CD4-positive, alpha-beta T cell (primary cell): ENCODE measurements at regions of chr1 and their contacts with region 1.

Region 1: GRCh38 chr1:3910857-3911845 is 11.1 kb upstream of the C1orf174 start:
- DNase-seq: peak; percentile 68 to 86 (median 74)
- ATAC-seq: peak; percentile 87
- H3K4me3 ChIP-seq: no peak overlapping the region
- H3K4me3 Mint-ChIP-seq: no peak overlapping the region
- H3K27ac ChIP-seq: no peak overlapping the region
- H3K27ac Mint-ChIP-seq: no peak overlapping the region
- H3K4me1 ChIP-seq: peaks cover 17% of the 10 kb centered on the region
- H3K4me1 Mint-ChIP-seq: peaks cover under 1% of the 10 kb centered on the region
- H3K27me3 ChIP-seq: peaks cover 0 to 2% of the 10 kb centered on the region in 2 experiments
- H3K27me3 Mint-ChIP-seq: no peaks in the 10 kb centered on the region
- CTCF ChIP-seq: peak; percentile 76

Region 2: DNA sequence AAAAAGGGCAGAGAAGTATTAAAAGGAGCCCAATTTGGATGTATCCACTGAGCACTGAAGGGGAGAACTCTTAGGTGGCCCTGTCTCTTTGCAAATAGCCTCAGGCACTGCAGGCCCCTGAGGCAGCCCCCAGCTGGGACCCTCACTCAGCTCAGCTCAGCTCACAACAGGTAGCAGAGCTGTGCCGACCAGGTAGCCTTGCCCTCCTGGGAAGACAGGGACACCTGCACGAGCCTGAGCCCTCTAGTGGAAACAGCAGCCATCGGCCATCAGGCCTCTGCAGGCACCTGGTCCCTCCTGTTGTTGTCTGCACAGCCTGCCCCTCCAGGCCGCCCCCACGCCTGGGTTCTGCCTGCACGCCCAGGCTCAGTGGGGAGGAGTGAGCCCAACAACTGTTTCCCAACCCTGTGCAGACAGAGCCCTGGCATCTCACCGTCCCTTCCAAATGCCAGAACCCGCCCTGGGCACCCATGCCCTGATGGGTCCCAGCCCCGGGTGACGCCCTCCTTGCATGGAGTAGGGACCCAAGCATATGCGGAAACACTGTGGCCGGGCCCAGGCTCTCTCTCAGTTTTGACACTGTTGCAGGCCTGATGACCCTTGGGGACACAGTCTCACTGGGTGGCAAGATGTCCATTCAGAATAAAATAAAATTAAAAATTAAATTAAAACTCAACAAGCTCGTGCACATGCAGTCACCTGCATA is 683.3 kb after region 1 on chr1:
- CTCF ChIA-PET with region 1: no interaction called
- POLR2A ChIA-PET with region 1: no interaction called
- intact Hi-C with region 1: loop called in 1 of 2 experiments (anchors 10 kb)
- DNase-seq: peak in 1 of 14 experiments; percentile 1
- ATAC-seq: no peak
- H3K4me3 ChIP-seq: no peak overlapping the region
- H3K4me3 Mint-ChIP-seq: no peak overlapping the region
- H3K27ac ChIP-seq: no peak overlapping the region
- H3K27ac Mint-ChIP-seq: no peak overlapping the region
- H3K4me1 ChIP-seq: no peaks in the 10 kb centered on the region
- H3K4me1 Mint-ChIP-seq: no peaks in the 10 kb centered on the region
- H3K27me3 ChIP-seq: peaks cover 0 to 2% of the 10 kb centered on the region in 2 experiments
- H3K27me3 Mint-ChIP-seq: no peaks in the 10 kb centered on the region
- CTCF ChIP-seq: no peak